AG04450 (cell line): ENCODE measurements at regions of chr1 and their contacts with region 1.

Region 1: GRCh38 chr1:153510984-153511410 is 24.8 kb downstream of the S100A6 start:
- DNase-seq: peak; percentile 42
- H3K4me3 ChIP-seq: no peak overlapping the region
- H3K27ac ChIP-seq: no peak overlapping the region
- H3K27me3 ChIP-seq: no peaks in the 10 kb centered on the region
- CTCF ChIP-seq: peak; percentile 98

Region 2: DNA sequence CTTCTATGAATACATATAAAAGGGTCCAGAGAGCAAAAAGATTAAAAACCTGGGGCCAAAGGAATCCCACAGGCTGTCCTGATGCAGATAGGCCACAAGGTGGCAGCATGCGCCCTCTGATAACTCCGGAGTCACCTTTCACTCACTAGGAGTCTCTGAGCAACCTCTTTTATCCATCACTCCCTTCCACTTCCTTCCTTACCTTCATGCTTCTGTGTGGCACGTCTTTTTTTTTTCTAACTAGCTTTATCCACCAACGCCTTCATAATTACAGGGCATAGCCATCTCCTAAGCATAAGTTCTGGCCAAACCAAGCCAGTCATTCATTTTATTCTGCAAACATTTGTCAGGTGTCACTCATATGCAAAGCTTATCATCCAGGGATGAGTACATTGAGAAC is 158.5 kb before region 1 on chr1:
- CTCF ChIA-PET with region 1: interaction called, 14 read pairs
- POLR2A ChIA-PET with region 1: no interaction called
- DNase-seq: peak; percentile 30
- H3K4me3 ChIP-seq: no peak overlapping the region
- H3K27ac ChIP-seq: no peak overlapping the region
- H3K27me3 ChIP-seq: peaks cover 6% of the 10 kb centered on the region
- CTCF ChIP-seq: peak; percentile 93

Region 3: DNA sequence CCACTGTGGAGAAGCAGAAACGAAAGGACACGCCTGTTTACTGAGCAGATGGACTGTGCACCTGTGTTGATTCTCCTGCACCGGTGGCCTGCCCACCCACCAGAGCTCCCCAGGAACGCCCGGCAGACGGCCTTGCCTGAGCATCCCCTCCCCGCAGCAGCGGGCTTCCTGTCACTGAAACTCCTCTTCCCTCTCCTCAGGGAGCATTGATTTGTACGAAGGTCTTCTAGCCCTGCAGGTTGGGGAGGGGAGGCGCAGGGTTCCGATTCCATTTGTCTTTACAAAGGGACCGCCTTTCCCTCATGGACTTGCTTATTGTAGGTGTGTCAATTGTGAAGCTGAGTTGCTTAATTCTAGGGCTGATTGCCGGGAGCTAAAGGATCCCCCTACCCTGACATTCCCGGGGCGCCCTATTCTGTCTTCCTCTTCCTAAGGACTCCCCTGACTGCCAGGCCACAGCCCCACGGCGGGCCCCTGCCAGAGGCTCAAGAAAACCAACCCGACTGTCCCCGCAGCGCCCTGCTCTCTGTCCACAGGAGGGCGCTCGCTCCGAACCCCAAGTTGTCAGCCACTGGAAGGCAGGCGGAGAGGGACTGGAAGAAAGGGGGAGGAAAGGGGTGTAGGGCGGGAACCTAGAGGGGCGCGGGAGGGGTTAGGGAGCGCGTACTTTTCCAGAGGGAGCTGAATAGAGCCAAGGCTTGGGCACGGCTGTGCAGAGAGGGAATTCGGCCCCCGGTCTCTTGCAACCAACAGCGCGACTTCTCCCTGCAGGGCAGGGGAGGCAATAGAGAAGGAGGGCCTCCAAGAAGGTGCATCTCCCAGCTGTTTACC is 22.0 kb after region 1 on chr1:
- CTCF ChIA-PET with region 1: interaction called, 37 read pairs
- POLR2A ChIA-PET with region 1: interaction called, 9 read pairs
- DNase-seq: peak; percentile 52
- H3K4me3 ChIP-seq: peak overlapping the region; percentile 98
- H3K27ac ChIP-seq: peak overlapping the region; percentile 96
- H3K27me3 ChIP-seq: no peaks in the 10 kb centered on the region
- CTCF ChIP-seq: peak; percentile 88

Region 4: DNA sequence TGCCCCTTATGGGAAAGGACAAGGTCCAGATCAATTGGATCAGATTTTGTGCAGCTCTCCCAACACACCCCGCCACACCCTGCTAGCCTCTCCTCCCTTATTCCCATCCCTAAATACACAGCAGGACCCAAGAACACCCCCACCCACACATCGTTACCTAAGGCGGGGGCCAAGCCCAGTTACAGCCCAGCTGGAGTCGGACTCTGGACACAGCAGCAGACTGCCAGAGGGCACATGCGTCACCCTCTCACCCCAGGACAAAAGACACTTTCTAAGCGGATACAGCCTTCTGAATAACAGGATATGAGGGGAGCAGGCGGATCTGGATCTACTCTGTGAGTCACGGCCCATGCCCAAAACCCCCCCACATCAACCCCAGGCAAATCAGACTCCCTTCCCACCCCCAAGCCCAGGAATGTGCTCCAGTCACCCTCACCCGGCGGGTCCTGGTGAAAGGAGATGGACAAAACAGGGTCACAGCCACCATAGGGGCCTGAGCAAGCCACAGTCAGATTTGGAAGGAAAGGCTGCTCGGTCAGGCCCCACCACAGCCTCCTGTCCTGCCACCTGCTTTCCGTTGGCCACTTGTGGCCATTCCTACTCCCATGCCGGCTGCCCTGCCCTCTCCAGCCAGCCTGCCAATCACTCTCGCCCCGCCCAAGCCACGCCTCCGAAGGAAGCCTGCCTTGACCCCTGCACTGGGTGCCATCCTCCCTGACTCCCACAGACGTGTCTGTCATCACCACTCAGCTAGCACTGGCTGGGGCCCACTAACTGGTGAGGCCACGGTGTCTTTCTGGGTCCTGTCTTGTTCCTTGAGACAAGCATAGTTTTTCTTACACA is 98.0 kb after region 1 on chr1:
- CTCF ChIA-PET with region 1: interaction called, 11 read pairs
- POLR2A ChIA-PET with region 1: interaction called, 3 read pairs
- DNase-seq: no peak
- H3K4me3 ChIP-seq: peak overlapping the region; percentile 57
- H3K27ac ChIP-seq: peak overlapping the region; percentile 90
- H3K27me3 ChIP-seq: no peaks in the 10 kb centered on the region
- CTCF ChIP-seq: no peak

Region 5: GRCh38 chr1:153633716-153634665 is 123.0 kb after region 1 on chr1 and contains the start of gene CHTOP:
- CTCF ChIA-PET with region 1: interaction called, 15 read pairs
- POLR2A ChIA-PET with region 1: interaction called, 14 read pairs
- DNase-seq: peak; percentile 97
- H3K4me3 ChIP-seq: peak within 1 kb of the TSS; percentile 95
- H3K27ac ChIP-seq: peak within 1 kb of the TSS; percentile 100
- H3K27me3 ChIP-seq: no peaks in the 10 kb centered on the region
- CTCF ChIP-seq: no peak
- polyA plus RNA-seq, gene CHTOP: 49.2 and 59.5 TPM in 2 replicates

Region 6: DNA sequence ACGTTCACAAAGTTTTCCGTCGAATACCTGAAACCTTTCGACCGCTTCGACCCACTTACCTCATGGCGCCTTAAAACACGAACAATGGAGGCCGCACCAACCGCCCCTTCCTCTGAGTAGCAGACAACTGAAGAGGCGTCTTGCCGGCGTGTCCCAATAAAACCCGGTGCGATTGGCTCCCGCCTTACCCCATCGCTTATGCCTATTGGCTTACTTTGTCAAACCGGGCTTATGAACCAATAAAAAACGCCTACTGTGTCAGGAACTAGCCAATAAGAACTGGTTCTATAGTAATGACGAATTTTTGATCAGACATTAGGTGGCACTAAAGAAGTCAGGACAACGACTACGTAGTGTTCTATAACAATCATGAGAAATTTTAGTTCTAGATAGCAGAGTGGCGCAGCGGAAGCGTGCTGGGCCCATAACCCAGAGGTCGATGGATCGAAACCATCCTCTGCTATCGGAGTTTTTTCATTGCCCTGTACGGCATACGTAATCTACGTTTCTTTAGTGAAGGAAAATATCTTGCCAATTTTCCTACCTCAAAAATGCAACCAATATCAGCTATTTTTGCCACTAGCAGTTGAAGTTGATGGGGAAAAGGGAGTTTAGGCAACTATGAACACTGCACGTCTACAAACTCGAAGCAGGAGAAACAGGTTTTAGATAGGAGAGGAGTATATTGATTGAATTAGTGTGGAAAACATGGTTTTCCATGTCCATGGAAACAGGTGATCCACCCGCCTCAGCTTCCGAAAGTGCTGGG is 160.0 kb after region 1 on chr1 and contains the start of gene ILF2:
- CTCF ChIA-PET with region 1: interaction called, 10 read pairs
- POLR2A ChIA-PET with region 1: interaction called, 3 read pairs
- DNase-seq: peak; percentile 99
- H3K4me3 ChIP-seq: peak within 1 kb of the TSS; percentile 95
- H3K27ac ChIP-seq: peak within 1 kb of the TSS; percentile 84
- H3K27me3 ChIP-seq: no peaks in the 10 kb centered on the region
- CTCF ChIP-seq: peak; percentile 30
- polyA plus RNA-seq, gene ILF2: 308 and 326 TPM in 2 replicates